ENCODE measurements at regions of chr3 and their contacts with region 1.

Region 1: DNA sequence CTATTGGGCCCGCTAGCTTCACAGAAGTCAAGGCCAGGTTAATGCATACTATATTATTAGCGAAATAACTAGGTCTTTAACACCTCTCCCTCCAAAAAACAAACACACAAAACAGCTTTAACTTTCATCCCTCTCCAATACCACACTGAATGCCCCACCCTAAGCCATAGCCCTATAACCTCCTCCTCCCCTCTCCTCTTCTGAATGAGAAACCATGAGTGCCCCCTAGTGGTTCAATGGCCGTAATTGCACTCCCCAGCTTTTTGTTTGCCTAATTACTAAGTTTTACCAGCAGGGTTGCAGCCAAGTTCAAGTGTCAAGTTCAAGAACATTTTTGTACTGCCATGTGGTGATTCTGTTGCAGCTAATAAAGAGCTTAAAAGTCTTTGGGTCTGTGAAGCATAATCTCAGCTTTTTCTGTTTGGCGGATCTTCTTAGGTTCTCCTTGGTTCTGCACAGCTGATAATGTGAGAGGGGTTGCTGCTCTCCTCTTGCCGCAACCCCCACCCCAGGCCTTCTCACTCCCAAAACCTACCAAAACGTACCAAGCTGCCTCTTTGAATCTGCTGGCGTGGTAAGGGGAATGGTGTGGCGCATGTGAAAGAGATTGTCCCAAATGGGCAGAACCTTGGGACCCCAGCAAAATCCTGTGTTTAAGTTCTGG is 57.9 kb downstream of the RPL22L1 start:
- DNase-seq: peak; percentile 75
- H3K4me3 Mint-ChIP-seq: no peak overlapping the region
- H3K27ac Mint-ChIP-seq: no peak overlapping the region
- H3K4me1 Mint-ChIP-seq: peaks cover 4% of the 10 kb centered on the region
- H3K27me3 Mint-ChIP-seq: no peaks in the 10 kb centered on the region

Region 2: DNA sequence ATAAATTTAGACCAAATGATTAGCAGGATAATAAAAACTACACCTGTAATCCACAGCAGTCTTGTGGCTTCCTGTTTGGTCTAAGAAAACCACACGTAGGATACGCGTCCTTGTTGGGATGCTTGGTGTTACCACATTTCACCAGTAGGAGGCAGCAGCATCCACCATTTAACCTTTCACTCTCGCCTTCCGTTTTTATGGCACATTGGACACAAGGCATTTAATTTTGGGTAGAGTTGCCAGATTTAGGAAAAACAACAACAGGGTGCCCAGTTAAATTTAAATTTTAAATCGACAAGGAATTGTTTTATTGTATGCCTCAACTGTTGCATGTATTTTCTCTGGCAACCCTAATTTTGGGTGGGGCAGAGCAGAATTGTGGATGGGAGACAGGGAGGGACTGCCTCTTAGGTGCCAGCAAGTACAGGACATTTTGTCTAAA is 948.6 kb before region 1 on chr3:
- CTCF ChIA-PET with region 1: interaction called, 3 read pairs
- POLR2A ChIA-PET with region 1: no interaction called
- intact Hi-C with region 1: loop called (anchors 1 kb)
- DNase-seq: peak; percentile 79
- H3K4me3 Mint-ChIP-seq: no peak overlapping the region
- H3K27ac Mint-ChIP-seq: no peak overlapping the region
- H3K4me1 Mint-ChIP-seq: peaks cover 8% of the 10 kb centered on the region
- H3K27me3 Mint-ChIP-seq: peaks cover 10% of the 10 kb centered on the region

Region 3: GRCh38 chr3:170307671-170308403 is 504.2 kb before region 1 on chr3:
- CTCF ChIA-PET with region 1: interaction called, 3 read pairs
- POLR2A ChIA-PET with region 1: no interaction called
- intact Hi-C with region 1: loop called (anchors 5 kb)
- DNase-seq: no peak
- H3K4me3 Mint-ChIP-seq: no peak overlapping the region
- H3K27ac Mint-ChIP-seq: no peak overlapping the region
- H3K4me1 Mint-ChIP-seq: no peaks in the 10 kb centered on the region
- H3K27me3 Mint-ChIP-seq: no peaks in the 10 kb centered on the region

Region 4: GRCh38 chr3:170689893-170690660 is 122.0 kb before region 1 on chr3:
- CTCF ChIA-PET with region 1: interaction called, 7 read pairs
- POLR2A ChIA-PET with region 1: no interaction called
- intact Hi-C with region 1: loop called (anchors 5 kb)
- DNase-seq: peak; percentile 59
- H3K4me3 Mint-ChIP-seq: no peak overlapping the region
- H3K27ac Mint-ChIP-seq: no peak overlapping the region
- H3K4me1 Mint-ChIP-seq: peaks cover 2% of the 10 kb centered on the region
- H3K27me3 Mint-ChIP-seq: no peaks in the 10 kb centered on the region

Region 5: DNA sequence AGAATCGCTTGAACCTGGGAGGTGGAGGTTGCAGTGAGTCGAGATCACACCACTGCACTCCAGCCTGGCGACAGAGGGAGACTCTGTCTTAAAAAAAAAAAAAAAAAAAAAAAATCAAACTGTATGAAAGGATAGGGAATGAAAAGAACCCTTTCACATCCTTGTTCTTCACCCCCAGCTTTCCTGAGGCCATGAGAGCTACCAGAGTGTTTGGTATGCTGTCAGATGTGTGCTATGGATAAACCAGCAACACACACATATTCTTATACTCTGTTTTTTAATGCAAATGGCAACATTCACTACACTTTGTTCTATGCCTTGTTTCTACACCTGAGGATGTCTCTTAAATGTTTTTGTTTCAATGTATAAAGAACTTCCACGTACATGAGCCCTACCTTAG is 24.4 kb after region 1 on chr3:
- CTCF ChIA-PET with region 1: interaction called, 12 read pairs
- POLR2A ChIA-PET with region 1: no interaction called
- intact Hi-C with region 1: no loop called
- DNase-seq: no peak
- H3K4me3 Mint-ChIP-seq: no peak overlapping the region
- H3K27ac Mint-ChIP-seq: no peak overlapping the region
- H3K4me1 Mint-ChIP-seq: no peaks in the 10 kb centered on the region
- H3K27me3 Mint-ChIP-seq: peaks cover 32% of the 10 kb centered on the region

Region 6: DNA sequence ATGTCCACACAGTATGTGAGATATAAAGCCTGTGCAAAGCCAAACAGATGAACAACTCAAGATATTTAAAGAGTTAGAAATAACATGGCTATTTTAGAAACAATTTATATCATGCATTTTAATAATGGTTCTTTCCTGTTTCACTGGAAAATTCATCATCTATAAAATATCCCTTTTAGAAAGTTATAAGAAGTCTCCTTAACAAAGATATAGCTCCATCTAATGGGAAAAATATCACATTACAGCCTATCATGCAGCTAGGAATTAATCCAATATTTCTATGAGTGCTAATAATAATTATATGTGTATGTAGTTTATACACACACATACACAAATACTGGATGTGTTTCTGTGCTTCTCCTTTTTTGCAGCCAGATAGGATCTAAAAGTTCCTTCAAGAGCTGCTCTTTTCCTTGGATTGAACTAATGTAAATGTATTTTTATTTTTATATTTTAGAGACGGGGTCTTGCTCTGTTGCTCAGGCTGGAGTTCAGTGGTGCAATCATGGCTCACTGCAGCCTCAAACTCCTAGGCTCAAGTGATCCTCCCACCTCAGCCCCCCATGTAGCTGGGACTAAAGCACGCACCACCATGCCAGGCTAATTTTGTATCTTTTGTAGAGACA is 36.3 kb after region 1 on chr3:
- CTCF ChIA-PET with region 1: interaction called, 12 read pairs
- POLR2A ChIA-PET with region 1: no interaction called
- intact Hi-C with region 1: no loop called
- DNase-seq: no peak
- H3K4me3 Mint-ChIP-seq: no peak overlapping the region
- H3K27ac Mint-ChIP-seq: no peak overlapping the region
- H3K4me1 Mint-ChIP-seq: no peaks in the 10 kb centered on the region
- H3K27me3 Mint-ChIP-seq: peaks cover 16% of the 10 kb centered on the region